Right cardiac atrium (tissue), 5 donors: ENCODE measurements at regions of chr18 and their contacts with region 1.

Region 1: DNA sequence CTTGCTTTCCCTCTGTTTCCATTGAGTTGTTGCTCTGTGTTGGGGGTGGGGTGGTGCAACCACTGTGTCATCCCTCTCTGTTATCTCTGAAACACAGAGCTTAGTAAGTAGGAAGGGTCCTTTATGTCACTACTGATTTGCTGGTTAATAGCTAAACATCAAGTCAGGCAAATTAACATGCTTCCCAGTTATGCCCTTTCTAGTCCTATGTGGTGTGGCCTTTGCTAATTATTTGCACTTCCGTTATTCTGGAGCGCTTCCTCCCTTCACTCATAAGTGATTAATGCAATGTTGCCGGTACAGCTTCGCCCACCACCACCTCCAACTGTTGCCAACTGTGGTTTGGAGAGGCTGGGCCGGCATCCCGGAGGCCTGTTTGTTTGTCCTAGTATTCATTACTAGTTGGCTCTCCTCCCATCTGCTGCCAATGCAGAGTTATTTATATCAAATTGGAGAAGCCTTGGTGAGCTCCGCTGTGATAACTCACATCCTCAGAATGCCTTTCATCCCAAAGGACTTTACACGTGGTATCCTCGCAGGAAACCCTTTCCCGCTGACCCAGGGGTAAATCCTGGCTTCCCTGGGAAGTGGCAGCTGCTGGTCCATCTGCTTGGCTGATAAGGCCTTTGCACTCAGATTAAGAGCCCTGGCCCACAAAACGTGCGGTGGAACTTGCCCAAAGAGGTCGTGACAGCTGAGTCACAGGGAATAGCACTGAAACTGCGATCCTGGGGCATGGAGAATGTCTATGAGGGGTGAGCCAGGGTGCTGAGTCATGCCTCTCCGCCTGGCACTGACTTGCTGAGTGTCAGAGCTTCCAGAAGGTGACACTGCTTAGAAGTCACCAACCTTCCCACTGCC is 72.0 kb upstream of the ZCCHC2 start:
- DNase-seq: peak; percentile 80 to 84 (median 82)
- ATAC-seq: peak; percentile 92 to 95
- H3K4me3 ChIP-seq: no peak overlapping the region
- H3K27ac ChIP-seq: peak overlapping the region; percentile 65
- H3K4me1 ChIP-seq: peaks cover 8% of the 10 kb centered on the region
- H3K27me3 ChIP-seq: no peaks in the 10 kb centered on the region

Region 2: GRCh38 chr18:62510789-62511188 is 60.0 kb after region 1 on chr18:
- intact Hi-C with region 1: loop called in 1 of 4 experiments (anchors 10 kb)
- DNase-seq: no peak
- ATAC-seq: no peak
- H3K4me3 ChIP-seq: no peak overlapping the region
- H3K27ac ChIP-seq: no peak overlapping the region
- H3K4me1 ChIP-seq: no peaks in the 10 kb centered on the region
- H3K27me3 ChIP-seq: no peaks in the 10 kb centered on the region